ENCODE measurements at regions of chr9 and their contacts with region 1.

Region 1: DNA sequence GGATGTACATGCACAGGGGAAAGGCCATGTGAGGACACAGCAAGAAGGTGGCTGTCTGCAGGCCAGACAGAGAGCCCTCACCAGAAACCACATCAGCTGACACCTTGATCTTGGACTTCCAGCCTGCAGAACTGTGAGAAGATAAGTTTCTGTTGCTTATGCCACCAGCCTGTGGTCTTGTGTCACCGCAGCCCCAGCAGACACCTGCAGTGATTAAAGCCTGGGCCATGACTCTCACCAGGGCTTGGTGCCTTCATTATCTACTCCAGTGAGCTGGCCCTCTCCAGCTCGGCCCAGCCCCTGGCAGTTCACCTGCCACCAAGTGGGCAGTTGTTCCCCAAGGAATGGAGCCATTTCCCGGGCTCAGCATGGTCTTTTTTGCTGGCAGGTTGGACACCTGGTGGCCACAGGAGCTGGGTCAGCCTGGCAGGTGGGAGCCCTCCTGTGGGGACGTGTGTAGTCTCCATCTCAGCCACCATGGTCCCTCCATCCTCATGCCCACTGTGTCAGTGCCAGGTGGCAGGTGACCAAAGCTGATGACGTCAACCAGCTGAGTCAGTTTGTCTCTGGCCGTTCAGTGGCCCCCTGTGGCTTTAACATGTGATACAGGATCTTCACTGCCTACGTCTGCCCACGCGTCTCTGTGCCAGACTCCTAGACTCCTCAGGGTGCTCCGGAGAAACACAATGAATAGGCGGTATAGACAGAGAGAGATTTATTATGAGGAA is 99.9 kb upstream of the PPP1R26 start:
- DNase-seq: no peak
- H3K4me3 ChIP-seq: no peak overlapping the region
- H3K27ac ChIP-seq: no peak overlapping the region
- H3K4me1 ChIP-seq: no peaks in the 10 kb centered on the region
- H3K27me3 ChIP-seq: peaks cover 0 to 63% of the 10 kb centered on the region in 2 donors
- CTCF ChIP-seq: no peak
- POLR2A ChIP-seq: no peak

Region 2: GRCh38 chr9:134217832-134218629 is 1161.7 kb before region 1 on chr9:
- intact Hi-C with region 1: no loop called
- DNase-seq: no peak
- H3K4me3 ChIP-seq: no peak overlapping the region
- H3K27ac ChIP-seq: no peak overlapping the region
- H3K4me1 ChIP-seq: peaks cover 2 to 12% of the 10 kb centered on the region in 2 donors
- H3K27me3 ChIP-seq: no peaks in the 10 kb centered on the region
- CTCF ChIP-seq: peak in 1 of 3 donors; percentile 27
- POLR2A ChIP-seq: no peak

Region 3: GRCh38 chr9:137254624-137255447 is 1875.1 kb after region 1 on chr9 and contains the start of gene NELFB:
- intact Hi-C with region 1: loop called (anchors 10 kb)
- DNase-seq: peak; percentile 83 to 92
- H3K4me3 ChIP-seq: peak within 1 kb of the TSS; percentile 98 to 100 (median 99)
- H3K27ac ChIP-seq: peak within 1 kb of the TSS; percentile 55 to 84
- H3K4me1 ChIP-seq: peaks cover 5 to 12% of the 10 kb centered on the region in 2 donors
- H3K27me3 ChIP-seq: no peaks in the 10 kb centered on the region
- CTCF ChIP-seq: no peak
- POLR2A ChIP-seq: no peak
- total RNA-seq, gene NELFB: 32.6 to 39.2 (median 38.7) TPM

Measured in breast epithelium (tissue), 4 donors.